Activated naive CD4-positive, alpha-beta T cell treated with anti-CD3 and anti-CD28 coated beads for 36 hours (primary cell): ENCODE measurements at regions of chr7 and their contacts with region 1.

Region 1: DNA sequence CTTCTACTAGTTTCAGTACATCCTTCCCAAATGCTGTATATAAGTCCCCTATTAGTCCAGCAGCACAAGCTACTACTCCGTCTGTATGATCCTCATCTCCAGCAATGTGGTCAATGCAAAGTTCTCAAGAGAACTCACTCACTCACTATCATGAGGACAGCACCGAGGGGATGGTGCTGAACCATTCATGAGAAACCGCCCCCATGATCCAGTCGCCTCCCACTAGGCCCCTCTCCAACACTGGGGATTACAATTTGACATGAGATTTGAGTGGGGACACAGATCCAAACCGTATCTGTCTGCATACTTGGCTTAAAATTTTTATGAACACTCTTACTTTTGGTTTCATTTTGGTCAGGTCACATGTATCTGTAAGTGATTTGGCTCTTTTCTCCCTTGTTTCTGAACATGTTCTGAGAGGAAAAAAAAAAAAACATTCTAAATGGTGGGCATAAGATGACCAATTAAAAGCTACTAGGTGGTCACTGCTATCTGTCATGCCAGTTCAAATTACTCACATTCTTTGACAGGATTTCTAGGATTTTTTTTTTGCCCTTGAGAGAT is 60.1 kb downstream of the ZNF783 start:
- DNase-seq: no peak
- H3K4me3 Mint-ChIP-seq: peak overlapping the region; percentile 14
- H3K27ac Mint-ChIP-seq: no peak overlapping the region
- H3K4me1 Mint-ChIP-seq: peaks cover 19% of the 10 kb centered on the region
- H3K27me3 Mint-ChIP-seq: no peaks in the 10 kb centered on the region

Region 2: DNA sequence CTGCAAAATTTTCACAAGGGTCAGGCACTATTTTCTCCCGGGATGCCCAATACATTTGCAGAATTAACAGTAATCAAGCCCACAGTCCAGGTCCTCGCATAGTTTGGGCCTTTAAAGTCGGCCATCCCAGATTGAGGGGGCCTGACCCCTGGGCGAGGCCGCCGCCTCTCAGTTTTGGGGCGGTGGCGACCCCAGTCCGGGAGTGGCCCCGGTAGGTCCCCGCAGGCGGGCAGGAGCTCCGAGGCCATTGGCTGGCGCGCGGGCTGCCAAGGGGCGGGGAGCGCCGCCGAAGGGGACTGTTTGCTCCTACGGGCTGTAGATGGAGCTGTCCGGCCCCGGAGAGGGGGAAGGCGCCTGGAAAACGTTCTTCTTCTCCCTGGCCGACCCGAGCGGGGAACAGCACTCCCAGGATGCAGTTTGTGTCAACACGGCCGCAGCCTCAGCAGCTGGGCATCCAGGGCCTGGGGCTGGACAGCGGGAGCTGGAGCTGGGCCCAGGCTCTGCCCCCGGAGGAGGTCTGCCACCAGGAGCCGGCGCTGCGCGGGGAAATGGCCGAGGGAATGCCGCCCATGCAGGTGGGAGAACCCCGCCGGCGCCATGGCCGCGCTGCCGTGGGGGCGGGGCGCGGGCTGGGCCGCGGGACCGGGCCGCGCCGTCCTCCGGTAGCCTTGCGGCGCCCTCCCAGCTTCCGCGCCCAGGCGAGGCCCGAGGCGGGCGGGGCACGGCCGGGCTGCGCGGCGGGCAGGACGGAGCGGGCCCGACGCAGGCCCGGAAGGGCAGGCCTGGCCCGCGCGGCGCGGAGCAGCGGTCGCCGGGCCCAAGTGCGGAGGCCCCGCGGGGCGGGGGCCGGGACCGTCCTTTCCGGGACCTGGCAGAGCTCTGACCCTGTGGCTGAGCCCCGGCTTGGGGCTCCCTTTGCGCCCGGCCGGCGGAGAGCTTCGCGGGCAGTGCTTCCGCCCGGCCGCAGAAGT is 126.6 kb before region 1 on chr7 and contains the start of gene ZNF282:
- CTCF ChIA-PET with region 1: no interaction called
- intact Hi-C with region 1: no loop called
- DNase-seq: peak; percentile 85
- H3K4me3 Mint-ChIP-seq: peak within 1 kb of the TSS; percentile 85
- H3K27ac Mint-ChIP-seq: peak within 1 kb of the TSS; percentile 78
- H3K4me1 Mint-ChIP-seq: peaks cover 30% of the 10 kb centered on the region
- H3K27me3 Mint-ChIP-seq: no peaks in the 10 kb centered on the region
- total RNA-seq, gene ZNF282: 21.6 to 22.0 TPM

Region 3: GRCh38 chr7:149310113-149310836 is 11.8 kb before region 1 on chr7:
- CTCF ChIA-PET with region 1: interaction called, 15 read pairs
- intact Hi-C with region 1: no loop called
- DNase-seq: no peak
- H3K4me3 Mint-ChIP-seq: no peak overlapping the region
- H3K27ac Mint-ChIP-seq: no peak overlapping the region
- H3K4me1 Mint-ChIP-seq: peaks cover 2% of the 10 kb centered on the region
- H3K27me3 Mint-ChIP-seq: no peaks in the 10 kb centered on the region